Activated T-helper 1 cell treated with anti-CD3 and anti-CD28 coated beads, Interleukin-12 subunit alpha, Interleukin-12 subunit beta, Interleukin-2, Interleukin-4 antibody, amounts not matched to agents 30 ng/mL and 10 ng/mL and 1 ng/mL, durations not matched to agents 14 hours and 24 hours and 36 hours (primary cell): ENCODE measurements at regions of chr1 and their contacts with region 1.

Region 1: DNA sequence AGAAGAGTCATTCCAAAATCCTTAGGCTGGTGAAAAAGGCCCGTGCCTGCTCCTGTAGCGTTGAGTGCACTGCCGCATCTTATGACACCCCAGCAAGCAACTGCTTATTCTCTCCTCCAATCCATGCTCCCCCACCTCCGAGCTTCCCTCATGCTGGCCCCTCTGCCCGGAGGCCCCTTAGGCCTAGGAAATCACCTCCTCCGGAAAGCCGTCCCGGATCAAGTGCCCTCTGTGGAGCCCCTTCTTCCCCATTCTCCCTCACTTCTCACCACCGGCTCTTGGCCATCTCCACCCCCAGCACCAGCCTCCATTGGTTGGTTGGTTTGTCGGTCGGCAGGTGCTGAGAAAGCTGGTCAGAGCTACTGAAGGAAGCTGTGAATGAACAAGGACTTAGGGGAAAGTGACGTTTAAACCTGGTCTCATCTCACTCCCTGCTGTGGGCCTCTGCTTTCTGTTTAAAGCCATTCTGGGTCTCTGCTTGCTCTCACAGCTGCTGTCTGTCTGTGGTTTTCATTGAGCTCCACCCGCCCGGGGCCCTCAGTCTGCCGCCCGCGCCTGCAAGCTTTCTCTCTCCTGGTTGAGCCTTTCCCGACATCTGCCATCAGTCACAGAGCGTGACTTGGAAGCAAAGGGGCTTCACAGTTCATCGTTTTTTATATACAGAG is 122.2 kb downstream of the KCNN3 start:
- DNase-seq: peak; percentile 59
- H3K4me3 Mint-ChIP-seq: peak overlapping the region; percentile 85
- H3K27ac Mint-ChIP-seq: peak overlapping the region; percentile 94
- H3K4me1 Mint-ChIP-seq: peaks cover 82% of the 10 kb centered on the region
- H3K27me3 Mint-ChIP-seq: peaks cover 7% of the 10 kb centered on the region

Region 2: DNA sequence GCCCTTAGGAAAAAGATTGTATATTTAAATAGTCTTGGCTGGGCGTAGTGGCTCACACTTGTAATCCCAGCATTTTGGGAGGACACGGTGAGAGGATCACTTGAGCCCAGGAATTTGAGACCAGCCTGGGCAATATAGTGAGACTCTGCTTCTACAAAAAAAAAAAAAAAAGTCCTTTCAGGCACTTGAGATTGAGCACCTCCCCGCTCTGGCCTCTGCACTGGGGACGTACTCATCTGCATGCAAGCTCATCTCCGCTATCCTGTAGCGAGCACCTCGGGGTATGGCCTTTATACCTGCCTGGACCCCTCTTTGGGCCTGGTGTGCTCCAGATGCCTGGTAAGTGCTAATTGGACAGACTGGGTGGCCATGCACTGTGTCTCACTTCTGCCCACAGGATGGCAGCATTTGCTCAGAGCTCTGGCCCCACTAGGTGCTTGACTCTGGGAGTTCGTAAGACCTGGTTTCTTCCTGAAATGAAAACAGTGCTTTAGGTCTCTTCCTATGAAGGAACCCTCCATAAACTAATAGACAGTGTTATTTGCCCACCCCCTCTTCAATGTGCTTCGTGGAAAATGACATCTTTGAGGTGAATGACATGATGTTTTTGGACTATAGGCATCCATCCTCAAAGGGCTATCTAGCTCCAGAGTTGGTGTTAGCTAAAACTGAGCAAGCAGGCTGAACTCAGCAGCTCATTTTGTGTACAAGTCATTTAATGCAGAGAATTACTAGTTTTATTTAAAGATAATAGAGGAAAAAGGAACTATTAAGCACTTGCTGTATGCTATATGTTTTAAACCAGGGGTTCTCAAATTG is 78.2 kb before region 1 on chr1:
- intact Hi-C with region 1: loop called (anchors 1 kb)
- DNase-seq: peak; percentile 64
- H3K4me3 Mint-ChIP-seq: no peak overlapping the region
- H3K27ac Mint-ChIP-seq: no peak overlapping the region
- H3K4me1 Mint-ChIP-seq: peaks cover 17% of the 10 kb centered on the region
- H3K27me3 Mint-ChIP-seq: peaks cover 2% of the 10 kb centered on the region

Region 3: DNA sequence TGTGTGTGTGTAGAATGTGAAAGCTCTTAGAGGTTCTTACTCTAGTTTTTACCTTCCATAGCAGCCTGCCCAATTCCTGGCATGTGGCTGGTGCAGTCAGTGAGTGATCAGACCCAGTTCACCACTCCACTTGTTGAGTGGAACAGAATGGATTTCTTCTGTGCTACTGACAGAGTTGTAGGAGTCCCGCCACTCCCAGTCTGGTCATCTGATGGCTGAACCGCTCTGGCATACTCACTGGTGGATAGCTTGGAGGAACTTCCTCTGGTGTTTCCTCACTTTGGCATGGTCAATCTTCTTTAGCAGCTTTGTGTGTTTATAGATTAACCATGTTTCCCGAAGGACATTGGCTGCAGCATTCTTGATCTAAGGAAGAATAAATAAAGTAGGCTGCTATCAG is 33.2 kb before region 1 on chr1:
- intact Hi-C with region 1: loop called (anchors 5 kb)
- DNase-seq: no peak
- H3K4me3 Mint-ChIP-seq: no peak overlapping the region
- H3K27ac Mint-ChIP-seq: no peak overlapping the region
- H3K4me1 Mint-ChIP-seq: peaks cover 11% of the 10 kb centered on the region
- H3K27me3 Mint-ChIP-seq: peaks cover 8% of the 10 kb centered on the region

Region 4: GRCh38 chr1:154736841-154737240 is 11.0 kb before region 1 on chr1:
- intact Hi-C with region 1: loop called (anchors 1 kb)
- DNase-seq: no peak
- H3K4me3 Mint-ChIP-seq: peak overlapping the region; percentile 49
- H3K27ac Mint-ChIP-seq: peak overlapping the region; percentile 87
- H3K4me1 Mint-ChIP-seq: peaks cover 65% of the 10 kb centered on the region
- H3K27me3 Mint-ChIP-seq: peaks cover 2% of the 10 kb centered on the region

Region 5: DNA sequence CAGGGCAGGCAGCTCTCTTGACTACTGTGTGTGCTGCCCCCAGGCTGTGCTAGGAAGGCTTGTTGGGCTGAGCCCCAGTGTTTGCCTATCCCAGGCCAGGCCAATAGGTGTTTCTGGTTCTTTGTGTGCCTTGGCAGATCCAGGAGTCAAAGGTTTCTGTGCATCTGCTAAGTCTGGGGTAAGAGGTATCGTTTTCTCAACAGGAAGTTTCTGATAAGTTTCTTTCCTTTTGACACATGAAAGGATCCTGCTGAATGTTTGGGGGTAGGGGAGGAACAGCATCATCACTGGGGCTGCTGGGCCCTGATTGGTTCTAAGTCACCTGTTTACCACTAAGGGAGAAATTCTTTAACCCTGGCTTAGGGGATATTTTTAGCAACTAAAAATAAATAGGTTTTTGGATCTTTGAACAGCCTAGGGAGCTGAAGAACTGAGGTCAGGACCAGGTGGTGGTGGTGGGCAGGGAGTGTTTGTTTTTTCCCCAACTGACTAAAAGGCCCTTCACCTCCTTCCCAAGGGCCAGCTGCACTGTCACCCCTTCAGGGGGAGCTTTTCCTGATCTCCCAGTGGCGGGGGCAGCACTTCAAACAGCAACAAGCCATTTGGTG is 37.2 kb after region 1 on chr1:
- intact Hi-C with region 1: loop called (anchors 1 kb)
- DNase-seq: peak; percentile 43
- H3K4me3 Mint-ChIP-seq: peak overlapping the region; percentile 23
- H3K27ac Mint-ChIP-seq: peak overlapping the region; percentile 81
- H3K4me1 Mint-ChIP-seq: peaks cover 45% of the 10 kb centered on the region
- H3K27me3 Mint-ChIP-seq: no peaks in the 10 kb centered on the region

Region 6: DNA sequence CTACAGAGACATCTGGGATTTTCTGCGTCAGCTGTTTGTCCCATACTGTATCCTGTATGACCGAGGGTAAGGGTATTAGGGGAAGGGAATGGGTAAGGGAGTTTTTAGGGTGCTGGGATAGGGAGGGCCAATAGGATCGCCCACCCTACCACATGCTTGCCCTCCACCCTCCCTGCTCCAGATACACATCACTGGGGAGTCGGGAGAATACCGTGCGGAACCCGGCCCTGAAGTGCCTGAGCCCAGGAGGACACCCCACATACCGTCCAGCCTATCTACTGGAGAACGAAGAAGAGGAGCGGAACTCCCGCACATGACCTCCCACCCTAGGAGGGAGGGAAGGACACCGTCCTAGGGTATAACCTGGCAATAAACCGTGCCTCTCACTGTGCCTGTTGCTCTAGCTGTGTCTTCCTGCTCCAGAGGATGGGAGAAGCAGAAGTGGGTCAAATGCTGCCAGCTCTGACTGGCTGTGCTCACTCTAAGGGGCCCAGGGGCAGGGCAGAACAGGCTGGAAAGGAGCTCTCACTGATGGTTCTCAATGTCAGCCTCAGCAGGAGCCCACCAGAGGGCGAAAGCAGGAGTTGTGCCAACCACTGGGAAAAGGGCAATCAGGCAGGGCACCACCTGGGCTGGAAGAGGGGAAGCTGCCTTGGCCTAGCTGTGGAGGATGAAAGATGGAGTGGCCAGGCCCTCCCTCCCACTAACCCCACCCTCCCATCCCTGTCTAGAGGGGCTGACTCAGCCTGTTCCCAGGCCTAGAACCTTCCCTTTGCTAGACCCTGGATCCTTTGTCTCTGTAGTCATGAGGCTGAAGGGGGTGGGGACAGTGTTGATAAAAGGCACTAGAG is 245.1 kb after region 1 on chr1:
- intact Hi-C with region 1: no loop called
- DNase-seq: no peak
- H3K4me3 Mint-ChIP-seq: no peak overlapping the region
- H3K27ac Mint-ChIP-seq: peak overlapping the region; percentile 23
- H3K4me1 Mint-ChIP-seq: peaks cover 37% of the 10 kb centered on the region
- H3K27me3 Mint-ChIP-seq: no peaks in the 10 kb centered on the region